ENCODE measurements at regions of chrX and their contacts with region 1.

Region 1: DNA sequence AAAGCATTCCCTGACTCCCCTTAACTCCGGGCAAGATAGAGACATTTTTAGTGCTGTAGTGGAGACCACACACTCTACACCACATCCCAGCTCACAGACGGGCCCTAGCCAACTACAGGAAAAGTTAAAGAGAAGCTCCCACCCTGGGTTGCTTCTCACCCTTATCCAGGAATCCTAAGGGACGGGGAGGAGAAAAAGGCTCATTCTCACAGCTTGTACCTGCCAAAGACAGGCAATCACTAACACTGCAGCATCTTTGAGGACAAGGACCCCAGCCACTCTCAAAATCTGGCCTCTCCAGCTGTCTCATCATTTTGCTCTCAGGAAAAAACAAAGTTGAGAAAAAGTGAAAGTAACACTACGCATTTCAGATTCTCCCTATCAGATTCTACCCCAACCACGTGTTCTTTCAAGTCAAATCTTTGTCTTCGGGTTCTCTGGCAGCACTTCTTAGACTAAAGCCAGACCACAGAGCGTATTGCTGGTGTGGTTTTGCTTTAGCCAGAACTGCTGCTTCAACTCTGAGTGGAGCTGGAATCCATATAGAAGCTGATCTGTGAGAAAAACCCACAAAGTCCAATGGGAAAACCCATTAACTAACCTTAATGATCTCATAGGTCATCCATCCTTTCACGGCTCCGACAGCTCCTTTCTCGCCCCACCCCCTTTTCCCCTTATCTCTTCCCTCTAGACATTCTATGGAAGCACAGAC is 605.9 kb upstream of the DIPK2B start:
- DNase-seq: peak; percentile 72 to 83 (median 79)
- H3K4me3 ChIP-seq: peak overlapping the region; percentile 56 to 65
- H3K4me3 Mint-ChIP-seq: peak overlapping the region; percentile 74 to 92 (median 84)
- H3K27ac ChIP-seq: peak overlapping the region; percentile 57
- H3K27ac Mint-ChIP-seq: peak overlapping the region; percentile 85 to 97 (median 94)
- H3K4me1 ChIP-seq: peaks cover 88% of the 10 kb centered on the region
- H3K4me1 Mint-ChIP-seq: peaks cover 35 to 86% (median 62%) of the 10 kb centered on the region in 4 donors
- H3K27me3 ChIP-seq: no peaks in the 10 kb centered on the region
- H3K27me3 Mint-ChIP-seq: no peaks in the 10 kb centered on the region

Region 2: DNA sequence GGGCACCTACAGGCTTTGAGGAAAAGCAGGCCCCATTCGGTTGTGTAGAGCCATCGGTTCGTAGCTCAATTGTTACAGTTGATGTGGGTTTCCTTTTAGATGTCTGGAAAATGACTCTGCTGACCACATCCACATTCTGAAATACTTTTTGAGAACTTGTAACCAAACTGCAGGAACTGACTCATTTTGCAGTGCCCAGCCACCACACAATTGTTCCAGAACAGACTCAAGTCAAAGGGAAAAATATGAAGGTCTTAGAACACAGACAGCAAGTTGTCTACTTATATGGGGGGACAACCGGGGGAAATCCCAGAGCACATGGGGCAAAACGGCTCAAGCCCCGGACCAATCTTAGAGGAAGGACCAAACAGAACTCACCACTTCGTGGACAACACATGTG is 48.2 kb before region 1 on chrX:
- CTCF ChIA-PET with region 1: interaction called, 19 read pairs
- POLR2A ChIA-PET with region 1: interaction called, 51 read pairs
- intact Hi-C with region 1: loop called (anchors 10 kb)
- DNase-seq: peak in 4 of 5 donors; percentile 36 to 77 (median 48)
- H3K4me3 ChIP-seq: peak overlapping the region in 1 of 2 donors; percentile 33
- H3K4me3 Mint-ChIP-seq: peak overlapping the region; percentile 73 to 91 (median 86)
- H3K27ac ChIP-seq: peak overlapping the region; percentile 56
- H3K27ac Mint-ChIP-seq: peak overlapping the region in 6 of 7 donors; percentile 90 to 96 (median 94)
- H3K4me1 ChIP-seq: peaks cover 91% of the 10 kb centered on the region
- H3K4me1 Mint-ChIP-seq: peaks cover 45 to 76% (median 60%) of the 10 kb centered on the region in 4 donors
- H3K27me3 ChIP-seq: no peaks in the 10 kb centered on the region
- H3K27me3 Mint-ChIP-seq: no peaks in the 10 kb centered on the region

Region 3: GRCh38 chrX:45769761-45770582 is 36.6 kb before region 1 on chrX:
- CTCF ChIA-PET with region 1: interaction called, 18 read pairs
- POLR2A ChIA-PET with region 1: interaction called, 120 read pairs
- intact Hi-C with region 1: loop called (anchors 1 kb)
- DNase-seq: peak in 3 of 5 donors; percentile 20 to 46 (median 32)
- H3K4me3 ChIP-seq: peak overlapping the region; percentile 55 to 68
- H3K4me3 Mint-ChIP-seq: peak overlapping the region; percentile 85 to 95 (median 90)
- H3K27ac ChIP-seq: peak overlapping the region; percentile 74
- H3K27ac Mint-ChIP-seq: peak overlapping the region; percentile 89 to 95 (median 94)
- H3K4me1 ChIP-seq: peaks cover 63% of the 10 kb centered on the region
- H3K4me1 Mint-ChIP-seq: peaks cover 29 to 80% (median 49%) of the 10 kb centered on the region in 4 donors
- H3K27me3 ChIP-seq: no peaks in the 10 kb centered on the region
- H3K27me3 Mint-ChIP-seq: no peaks in the 10 kb centered on the region

Region 4: GRCh38 chrX:45794323-45794994 is 12.1 kb before region 1 on chrX:
- CTCF ChIA-PET with region 1: interaction called, 4 read pairs
- POLR2A ChIA-PET with region 1: interaction called, 15 read pairs
- intact Hi-C with region 1: no loop called
- DNase-seq: no peak
- H3K4me3 ChIP-seq: no peak overlapping the region
- H3K4me3 Mint-ChIP-seq: peak overlapping the region in 1 of 8 donors; percentile 4
- H3K27ac ChIP-seq: no peak overlapping the region
- H3K27ac Mint-ChIP-seq: peak overlapping the region in 3 of 7 donors; percentile 39 to 47 (median 43)
- H3K4me1 ChIP-seq: peaks cover 48% of the 10 kb centered on the region
- H3K4me1 Mint-ChIP-seq: peaks cover 24 to 65% (median 39%) of the 10 kb centered on the region in 4 donors
- H3K27me3 ChIP-seq: no peaks in the 10 kb centered on the region
- H3K27me3 Mint-ChIP-seq: no peaks in the 10 kb centered on the region

Region 5: DNA sequence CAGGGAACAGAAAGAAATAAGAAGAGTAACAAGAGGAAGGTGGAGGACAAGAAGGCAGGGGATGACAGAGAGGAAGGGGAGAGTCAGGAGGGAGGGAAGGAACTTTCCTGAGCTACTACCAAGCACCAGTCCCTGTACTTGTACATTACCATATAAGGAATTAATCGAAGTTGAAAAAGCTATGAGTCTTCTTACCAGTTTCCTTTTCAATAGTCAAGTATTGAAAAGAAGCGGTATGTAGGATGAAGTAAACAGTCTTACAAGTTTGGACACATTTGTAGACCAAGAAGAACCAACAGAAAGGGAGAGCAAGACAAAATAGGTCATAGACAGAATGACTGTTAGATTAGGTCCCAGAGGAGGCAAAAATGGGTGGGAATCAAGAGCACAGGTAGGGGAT is 23.8 kb after region 1 on chrX:
- CTCF ChIA-PET with region 1: interaction called, 4 read pairs
- POLR2A ChIA-PET with region 1: interaction called, 12 read pairs
- intact Hi-C with region 1: no loop called
- DNase-seq: no peak
- H3K4me3 ChIP-seq: no peak overlapping the region
- H3K4me3 Mint-ChIP-seq: peak overlapping the region in 4 of 8 donors; percentile 15 to 68 (median 30)
- H3K27ac ChIP-seq: no peak overlapping the region
- H3K27ac Mint-ChIP-seq: peak overlapping the region in 4 of 7 donors; percentile 40 to 67 (median 52)
- H3K4me1 ChIP-seq: peaks cover 11% of the 10 kb centered on the region
- H3K4me1 Mint-ChIP-seq: peaks cover 4 to 23% (median 17%) of the 10 kb centered on the region in 4 donors
- H3K27me3 ChIP-seq: no peaks in the 10 kb centered on the region
- H3K27me3 Mint-ChIP-seq: no peaks in the 10 kb centered on the region

Region 6: GRCh38 chrX:45843518-45843917 is 37.0 kb after region 1 on chrX:
- CTCF ChIA-PET with region 1: interaction called, 66 read pairs
- POLR2A ChIA-PET with region 1: interaction called, 25 read pairs
- intact Hi-C with region 1: loop called (anchors 1 kb)
- DNase-seq: peak in 4 of 5 donors; percentile 14 to 24 (median 21)
- H3K4me3 ChIP-seq: no peak overlapping the region
- H3K4me3 Mint-ChIP-seq: peak overlapping the region in 1 of 8 donors; percentile 7
- H3K27ac ChIP-seq: no peak overlapping the region
- H3K27ac Mint-ChIP-seq: peak overlapping the region in 5 of 7 donors; percentile 2 to 48 (median 28)
- H3K4me1 ChIP-seq: peaks cover 24% of the 10 kb centered on the region
- H3K4me1 Mint-ChIP-seq: peaks cover 11 to 33% (median 23%) of the 10 kb centered on the region in 4 donors
- H3K27me3 ChIP-seq: no peaks in the 10 kb centered on the region
- H3K27me3 Mint-ChIP-seq: no peaks in the 10 kb centered on the region

Region 7: DNA sequence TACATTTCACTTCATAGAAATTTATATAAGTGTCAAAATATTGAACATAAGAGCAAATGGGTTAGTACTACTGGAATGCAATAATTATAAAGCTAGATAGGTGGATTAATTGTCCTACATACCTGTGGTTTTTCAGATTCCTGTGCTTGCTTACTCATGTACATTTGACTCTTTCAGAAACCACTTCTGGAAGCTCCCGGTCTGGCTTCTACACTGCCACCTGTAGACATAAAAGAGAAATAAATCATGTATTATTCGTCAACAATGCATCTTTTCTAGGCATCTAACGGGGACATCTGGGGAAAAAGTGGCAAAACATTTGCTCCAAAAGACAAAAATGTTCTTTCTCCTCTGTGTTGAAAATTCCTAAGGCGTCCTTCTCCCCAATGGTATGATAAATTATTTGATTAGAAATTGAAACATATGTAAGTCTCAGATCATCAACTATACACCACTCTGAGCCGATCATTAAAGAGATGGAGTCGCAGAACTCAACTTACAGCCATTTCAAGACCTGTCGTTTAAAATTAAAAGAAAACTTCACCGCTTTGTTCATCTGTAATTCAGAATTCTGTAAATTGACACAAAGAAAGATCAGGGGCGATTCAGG is 42.8 kb after region 1 on chrX:
- CTCF ChIA-PET with region 1: interaction called, 66 read pairs
- POLR2A ChIA-PET with region 1: interaction called, 30 read pairs
- intact Hi-C with region 1: loop called (anchors 1 kb)
- DNase-seq: peak; percentile 34 to 52 (median 38)
- H3K4me3 ChIP-seq: peak overlapping the region; percentile 49 to 80
- H3K4me3 Mint-ChIP-seq: peak overlapping the region; percentile 91 to 97 (median 94)
- H3K27ac ChIP-seq: no peak overlapping the region
- H3K27ac Mint-ChIP-seq: peak overlapping the region; percentile 48 to 81 (median 66)
- H3K4me1 ChIP-seq: peaks cover 8% of the 10 kb centered on the region
- H3K4me1 Mint-ChIP-seq: peaks cover 5 to 28% (median 15%) of the 10 kb centered on the region in 4 donors
- H3K27me3 ChIP-seq: no peaks in the 10 kb centered on the region
- H3K27me3 Mint-ChIP-seq: no peaks in the 10 kb centered on the region